Left ventricle myocardium inferior (tissue), 1 donor: ENCODE measurements at regions of chr9 and their contacts with region 1.

Region 1: DNA sequence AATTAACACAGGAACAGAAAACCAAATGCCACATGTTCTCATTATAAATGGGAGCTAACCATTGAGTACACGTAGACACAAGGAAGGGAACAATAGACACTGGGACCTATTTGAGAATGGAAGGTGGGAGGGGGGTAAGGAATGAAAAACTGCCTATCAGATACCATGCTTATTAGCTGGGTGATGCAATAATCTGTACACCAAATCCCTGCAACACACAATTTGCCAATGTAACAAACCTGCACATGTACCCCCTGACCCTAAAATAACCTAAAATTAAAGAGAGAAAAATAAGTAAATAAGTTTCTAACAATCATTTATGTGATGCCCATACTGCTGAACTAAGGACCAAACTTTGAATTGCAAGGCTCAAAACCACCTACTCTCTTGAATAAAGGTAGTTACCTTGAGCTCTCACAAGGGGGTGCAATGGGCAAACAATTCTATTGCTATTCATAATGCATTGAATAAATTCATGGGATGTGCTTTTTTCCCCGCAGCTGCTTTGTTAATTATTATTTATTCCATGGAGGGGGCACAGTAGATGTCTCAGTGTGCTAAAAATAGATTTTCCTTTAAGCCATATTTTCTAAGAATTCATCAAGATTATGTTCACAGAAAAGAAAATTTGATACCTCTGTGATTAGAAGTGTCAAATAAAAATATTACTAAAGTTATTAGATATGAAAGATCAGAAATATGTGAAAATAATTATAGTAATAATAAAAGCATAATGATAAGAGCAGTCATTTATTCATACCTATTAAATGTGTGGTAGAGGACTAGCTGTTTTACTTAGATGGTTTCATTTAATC is 76.2 kb upstream of the PTPN3 start:
- DNase-seq: no peak
- H3K4me3 ChIP-seq: no peak overlapping the region
- H3K27ac ChIP-seq: no peak overlapping the region
- H3K4me1 ChIP-seq: peaks cover 4% of the 10 kb centered on the region
- H3K27me3 ChIP-seq: no peaks in the 10 kb centered on the region
- CTCF ChIP-seq: peak; percentile 74

Region 2: DNA sequence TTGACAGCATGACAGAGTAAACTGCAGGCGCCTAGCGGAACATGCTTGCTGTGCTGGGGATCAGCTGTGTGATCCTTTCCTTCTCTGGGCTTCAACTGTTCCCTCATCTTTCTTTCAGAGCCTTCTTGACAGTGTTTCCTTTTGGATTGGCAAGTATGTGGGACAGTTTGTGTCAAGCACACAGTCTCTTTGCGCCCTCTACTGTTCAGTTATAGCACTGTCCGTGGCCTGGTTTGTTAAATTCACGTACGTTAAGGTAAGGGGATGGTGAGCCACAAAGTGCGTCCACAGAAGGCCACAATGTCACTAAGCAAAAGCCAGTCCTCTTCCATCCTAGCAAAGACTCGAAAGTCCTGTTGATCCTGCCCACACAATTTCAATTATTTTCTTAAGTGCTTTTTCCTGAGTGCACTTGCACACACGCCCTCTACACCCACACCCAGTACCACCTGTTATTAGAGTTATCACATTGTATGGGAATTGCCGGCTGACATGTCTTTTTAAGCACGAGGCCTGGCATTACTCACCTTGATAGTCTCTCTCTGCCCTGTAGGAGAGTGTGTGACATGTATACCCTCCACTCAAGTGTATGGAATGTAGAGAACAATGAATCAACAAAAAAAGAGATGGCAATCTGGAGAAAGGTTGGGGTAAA is 53.7 kb before region 1 on chr9:
- intact Hi-C with region 1: no loop called
- DNase-seq: peak; percentile 24
- H3K4me3 ChIP-seq: no peak overlapping the region
- H3K27ac ChIP-seq: no peak overlapping the region
- H3K4me1 ChIP-seq: no peaks in the 10 kb centered on the region
- H3K27me3 ChIP-seq: no peaks in the 10 kb centered on the region
- CTCF ChIP-seq: peak; percentile 92

Region 3: GRCh38 chr9:109627041-109627440 is 52.8 kb after region 1 on chr9:
- intact Hi-C with region 1: no loop called
- DNase-seq: peak; percentile 23
- H3K4me3 ChIP-seq: no peak overlapping the region
- H3K27ac ChIP-seq: no peak overlapping the region
- H3K4me1 ChIP-seq: peaks cover 11% of the 10 kb centered on the region
- H3K27me3 ChIP-seq: no peaks in the 10 kb centered on the region
- CTCF ChIP-seq: peak; percentile 38

Region 4: GRCh38 chr9:109652964-109653363 is 78.7 kb after region 1 on chr9:
- intact Hi-C with region 1: loop called (anchors 10 kb)
- DNase-seq: no peak
- H3K4me3 ChIP-seq: no peak overlapping the region
- H3K27ac ChIP-seq: no peak overlapping the region
- H3K4me1 ChIP-seq: peaks cover 4% of the 10 kb centered on the region
- H3K27me3 ChIP-seq: no peaks in the 10 kb centered on the region
- CTCF ChIP-seq: peak; percentile 69

Region 5: DNA sequence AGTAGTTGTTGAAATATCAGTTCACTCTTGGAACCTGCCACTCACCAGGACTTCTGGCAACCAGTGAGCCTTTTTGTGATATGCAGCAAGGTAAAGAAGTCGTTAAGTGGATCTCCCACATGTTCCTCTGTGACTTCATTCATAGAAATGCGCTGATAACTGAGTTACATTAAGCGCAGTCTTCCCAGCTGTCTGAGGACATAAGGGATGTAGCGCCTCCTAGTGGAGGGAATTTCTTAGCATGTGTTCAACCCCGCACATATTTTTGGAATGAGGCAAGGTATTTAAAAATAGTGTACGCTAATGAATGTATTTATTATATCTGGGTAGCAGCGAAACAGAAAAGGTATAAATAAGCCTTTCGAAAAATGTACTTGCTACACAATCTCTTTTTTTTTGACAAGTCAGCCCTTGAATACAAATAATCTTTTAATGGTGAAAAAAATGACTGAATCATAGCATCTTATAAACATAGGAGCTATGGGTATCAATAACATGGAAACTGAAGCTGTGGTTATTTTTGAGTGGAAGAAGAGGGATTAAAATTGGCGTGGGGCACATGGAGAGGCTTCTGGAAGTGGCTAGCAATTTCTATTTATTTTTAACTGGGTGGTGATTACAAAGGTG is 243.7 kb after region 1 on chr9:
- intact Hi-C with region 1: loop called (anchors 5 kb)
- DNase-seq: no peak
- H3K4me3 ChIP-seq: peak overlapping the region; percentile 2
- H3K27ac ChIP-seq: peak overlapping the region; percentile 71
- H3K4me1 ChIP-seq: peaks cover 39% of the 10 kb centered on the region
- H3K27me3 ChIP-seq: no peaks in the 10 kb centered on the region
- CTCF ChIP-seq: peak; percentile 83

Region 6: GRCh38 chr9:109880277-109881169 is 306.2 kb after region 1 on chr9:
- intact Hi-C with region 1: loop called (anchors 5 kb)
- DNase-seq: no peak
- H3K4me3 ChIP-seq: no peak overlapping the region
- H3K27ac ChIP-seq: no peak overlapping the region
- H3K4me1 ChIP-seq: peaks cover 20% of the 10 kb centered on the region
- H3K27me3 ChIP-seq: no peaks in the 10 kb centered on the region
- CTCF ChIP-seq: peak; percentile 70